Calu3 (cell line): ENCODE measurements at regions of chr3 and their contacts with region 1.

Region 1: GRCh38 chr3:157532529-157533297 is 29.5 kb upstream of the VEPH1 start:
- DNase-seq: peak; percentile 74
- H3K4me3 Mint-ChIP-seq: no peak overlapping the region
- H3K27ac Mint-ChIP-seq: no peak overlapping the region
- H3K4me1 Mint-ChIP-seq: no peaks in the 10 kb centered on the region
- H3K27me3 Mint-ChIP-seq: no peaks in the 10 kb centered on the region
- CTCF ChIP-seq: peak; percentile 94

Region 2: DNA sequence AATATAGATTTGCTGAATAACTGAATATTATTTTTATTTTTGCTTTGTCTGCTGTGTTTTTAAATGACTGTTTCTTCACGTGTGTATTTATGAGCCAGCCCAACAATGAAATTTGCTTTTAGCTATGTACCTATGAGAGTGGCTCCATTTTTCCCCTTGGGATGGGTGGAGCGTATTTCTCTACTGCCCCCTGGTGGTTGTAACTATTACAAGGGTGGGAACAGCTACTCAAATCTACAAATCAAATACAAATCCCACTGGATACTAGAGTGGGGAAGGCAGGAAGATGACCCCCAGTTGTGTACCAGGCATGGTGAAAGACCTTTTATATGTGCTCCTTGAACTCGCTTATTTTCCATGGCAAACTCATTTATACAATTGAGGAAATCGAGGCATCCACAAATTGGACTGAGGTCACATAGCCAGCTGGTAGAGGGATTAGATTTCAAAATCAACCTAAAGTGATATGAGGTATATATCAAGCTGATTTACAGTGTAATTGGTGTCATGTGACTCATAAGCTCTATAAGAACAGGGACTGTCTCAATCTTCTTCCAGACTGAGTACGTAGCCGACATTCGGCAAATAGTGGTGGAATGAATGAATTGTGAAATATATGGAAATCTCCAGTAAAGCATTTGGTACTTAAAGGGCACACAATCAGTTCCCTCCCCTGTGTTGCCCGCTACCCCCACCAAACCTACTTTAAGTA is 40.0 kb after region 1 on chr3:
- CTCF ChIA-PET with region 1: interaction called, 81 read pairs
- intact Hi-C with region 1: loop called (anchors 1 kb)
- DNase-seq: peak; percentile 77
- H3K4me3 Mint-ChIP-seq: no peak overlapping the region
- H3K27ac Mint-ChIP-seq: peak overlapping the region; percentile 34
- H3K4me1 Mint-ChIP-seq: peaks cover 29% of the 10 kb centered on the region
- H3K27me3 Mint-ChIP-seq: no peaks in the 10 kb centered on the region
- CTCF ChIP-seq: peak; percentile 98

Region 3: GRCh38 chr3:157618075-157618760 is 85.5 kb after region 1 on chr3:
- CTCF ChIA-PET with region 1: interaction called, 11 read pairs
- intact Hi-C with region 1: no loop called
- DNase-seq: peak; percentile 29
- H3K4me3 Mint-ChIP-seq: no peak overlapping the region
- H3K27ac Mint-ChIP-seq: no peak overlapping the region
- H3K4me1 Mint-ChIP-seq: peaks cover 9% of the 10 kb centered on the region
- H3K27me3 Mint-ChIP-seq: peaks cover 13% of the 10 kb centered on the region
- CTCF ChIP-seq: peak; percentile 80

Region 4: DNA sequence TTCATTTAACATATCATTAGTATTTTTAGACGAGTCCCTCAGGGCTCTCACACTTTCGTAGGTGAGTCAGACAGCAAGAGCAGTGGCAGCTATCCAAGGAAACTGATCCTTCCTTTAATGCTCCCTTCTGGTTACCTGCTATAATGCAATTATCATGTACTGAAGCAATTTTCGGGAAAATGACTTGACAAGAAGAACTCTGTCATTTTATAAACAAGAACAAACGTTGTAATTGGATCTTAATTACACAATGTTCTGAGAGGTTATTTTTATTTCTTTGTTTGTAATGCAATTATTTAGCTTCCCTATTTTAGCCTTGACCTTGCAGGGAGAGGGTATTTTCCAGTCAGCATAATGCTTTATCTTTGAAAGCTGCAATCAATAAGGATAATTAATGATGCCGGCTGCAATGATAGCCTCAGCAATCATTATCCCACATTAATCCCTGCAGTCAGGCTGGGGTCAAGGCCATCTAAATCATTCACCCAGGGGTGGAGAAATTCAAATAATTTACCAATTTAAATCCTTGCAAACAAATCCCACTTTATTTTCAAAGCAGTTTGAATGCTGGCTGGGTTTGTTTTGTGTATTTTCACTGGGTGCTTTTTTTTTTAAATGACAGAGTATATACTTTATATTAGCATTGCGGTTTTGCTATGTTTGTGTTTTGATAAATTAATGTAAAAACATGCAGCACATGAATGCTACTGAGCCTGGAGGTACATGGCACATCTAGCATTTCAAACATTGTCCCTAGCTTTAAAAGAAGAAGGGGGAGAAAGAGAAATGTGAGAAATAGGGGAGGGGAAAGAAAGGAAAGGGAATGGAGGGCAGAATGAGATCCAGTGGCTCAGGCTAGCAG is 323.6 kb after region 1 on chr3:
- CTCF ChIA-PET with region 1: interaction called, 3 read pairs
- intact Hi-C with region 1: loop called (anchors 10 kb)
- DNase-seq: no peak
- H3K4me3 Mint-ChIP-seq: no peak overlapping the region
- H3K27ac Mint-ChIP-seq: no peak overlapping the region
- H3K4me1 Mint-ChIP-seq: no peaks in the 10 kb centered on the region
- H3K27me3 Mint-ChIP-seq: peaks cover 7% of the 10 kb centered on the region
- CTCF ChIP-seq: no peak

Region 5: DNA sequence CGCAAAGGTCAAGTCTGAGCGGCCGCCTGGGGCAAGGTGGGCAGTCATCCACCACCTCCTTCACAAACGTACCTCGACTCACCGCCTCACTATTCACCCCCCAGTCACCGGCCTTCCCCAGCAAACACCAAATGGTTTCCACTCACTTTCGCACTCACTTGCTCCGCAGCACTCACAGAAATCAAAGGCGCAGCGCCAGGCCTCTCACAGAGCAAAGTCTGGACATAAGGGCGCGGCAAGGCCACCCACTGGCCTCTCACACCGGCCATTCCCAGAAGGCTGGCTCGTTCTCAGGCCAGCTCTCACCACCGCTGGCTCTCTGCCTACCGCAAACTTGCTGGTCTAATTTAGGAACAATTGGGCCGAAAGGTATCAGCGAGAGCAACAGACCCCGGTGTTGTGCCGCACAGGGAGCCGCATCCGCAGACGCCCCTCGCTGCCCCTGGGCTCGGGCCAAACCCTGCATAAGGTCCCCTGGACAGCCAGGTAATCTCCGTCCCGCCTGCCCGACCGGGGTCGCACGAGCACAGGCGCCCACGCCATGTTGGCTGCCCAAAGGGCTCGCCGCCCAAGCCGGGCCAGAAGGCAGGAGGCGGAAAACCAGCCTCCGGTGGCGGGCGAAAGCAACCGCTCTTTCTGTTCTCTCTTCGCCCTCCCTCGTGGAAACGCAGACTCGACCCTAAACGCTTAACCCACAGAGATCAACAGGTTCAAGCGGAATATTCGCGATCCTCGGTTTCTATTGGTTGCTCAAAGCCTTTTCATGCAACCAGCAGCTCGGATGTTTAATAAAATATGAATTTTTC is 570.6 kb after region 1 on chr3:
- CTCF ChIA-PET with region 1: no interaction called
- intact Hi-C with region 1: loop called (anchors 5 kb)
- DNase-seq: peak; percentile 39
- H3K4me3 Mint-ChIP-seq: peak overlapping the region; percentile 81
- H3K27ac Mint-ChIP-seq: peak overlapping the region; percentile 26
- H3K4me1 Mint-ChIP-seq: peaks cover 32% of the 10 kb centered on the region
- H3K27me3 Mint-ChIP-seq: peaks cover 21% of the 10 kb centered on the region
- CTCF ChIP-seq: no peak

Region 6: GRCh38 chr3:158532099-158532734 is 999.5 kb after region 1 on chr3:
- CTCF ChIA-PET with region 1: no interaction called
- intact Hi-C with region 1: loop called (anchors 2 kb)
- DNase-seq: peak; percentile 50
- H3K4me3 Mint-ChIP-seq: no peak overlapping the region
- H3K27ac Mint-ChIP-seq: no peak overlapping the region
- H3K4me1 Mint-ChIP-seq: peaks cover 8% of the 10 kb centered on the region
- H3K27me3 Mint-ChIP-seq: no peaks in the 10 kb centered on the region
- CTCF ChIP-seq: peak; percentile 73